CD4-positive, alpha-beta memory T cell (primary cell): ENCODE measurements at regions of chr12 and their contacts with region 1.

Region 1: GRCh38 chr12:9797722-9798619 is 29.3 kb upstream of the KLRF1 start:
- DNase-seq: peak; percentile 73 to 79 (median 75)
- H3K4me3 ChIP-seq: no peak overlapping the region
- H3K4me3 Mint-ChIP-seq: peak overlapping the region in 4 of 8 donors; percentile 4 to 70 (median 41)
- H3K27ac ChIP-seq: no peak overlapping the region
- H3K27ac Mint-ChIP-seq: peak overlapping the region in 6 of 7 donors; percentile 57 to 89 (median 81)
- H3K4me1 ChIP-seq: peaks cover 51% of the 10 kb centered on the region
- H3K4me1 Mint-ChIP-seq: peaks cover 35 to 48% (median 43%) of the 10 kb centered on the region in 4 donors
- H3K27me3 ChIP-seq: no peaks in the 10 kb centered on the region
- H3K27me3 Mint-ChIP-seq: peaks cover 0 to 2% of the 10 kb centered on the region in 2 donors

Region 2: GRCh38 chr12:9634177-9634803 is 163.7 kb before region 1 on chr12:
- CTCF ChIA-PET with region 1: interaction called, 19 read pairs
- POLR2A ChIA-PET with region 1: interaction called, 3 read pairs
- intact Hi-C with region 1: no loop called
- DNase-seq: peak; percentile 76 to 77 (median 77)
- H3K4me3 ChIP-seq: no peak overlapping the region
- H3K4me3 Mint-ChIP-seq: peak overlapping the region in 6 of 8 donors; percentile 51 to 80 (median 61)
- H3K27ac ChIP-seq: no peak overlapping the region
- H3K27ac Mint-ChIP-seq: peak overlapping the region; percentile 22 to 97 (median 91)
- H3K4me1 ChIP-seq: peaks cover 70% of the 10 kb centered on the region
- H3K4me1 Mint-ChIP-seq: peaks cover 47 to 92% (median 73%) of the 10 kb centered on the region in 4 donors
- H3K27me3 ChIP-seq: no peaks in the 10 kb centered on the region
- H3K27me3 Mint-ChIP-seq: no peaks in the 10 kb centered on the region

Region 3: DNA sequence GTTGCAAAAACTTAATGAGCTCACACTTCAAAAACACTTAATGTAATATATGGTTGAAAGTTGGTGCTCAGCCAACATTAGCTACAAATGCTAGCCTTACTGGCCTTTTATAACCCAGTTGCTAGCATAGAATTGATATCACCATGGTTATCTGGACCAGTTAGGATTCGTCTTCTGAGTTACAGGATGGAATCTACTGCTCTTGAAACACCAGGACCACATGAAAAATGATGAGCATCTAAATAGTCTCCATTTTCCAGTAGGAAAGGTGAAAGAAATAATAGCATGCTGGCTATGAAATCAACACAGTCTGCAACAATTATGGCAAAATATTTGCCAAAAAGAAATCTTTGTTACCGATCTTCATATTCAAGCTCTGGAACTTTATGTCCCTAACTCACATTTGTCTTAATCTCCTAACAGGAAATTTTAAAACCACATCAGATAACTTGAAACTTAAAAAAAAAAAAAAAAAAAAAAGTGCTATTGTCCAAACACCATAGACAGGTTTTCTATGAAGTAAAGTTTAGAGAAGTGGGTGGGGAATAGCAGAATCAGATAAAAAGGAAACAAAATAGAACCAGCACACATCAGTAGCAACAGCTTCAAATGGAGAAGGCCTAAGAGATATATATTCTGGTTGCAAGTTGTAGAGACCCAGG is 24.6 kb before region 1 on chr12:
- CTCF ChIA-PET with region 1: interaction called, 39 read pairs
- POLR2A ChIA-PET with region 1: interaction called, 9 read pairs
- intact Hi-C with region 1: no loop called
- DNase-seq: peak in 3 of 5 donors; percentile 45 to 59 (median 50)
- H3K4me3 ChIP-seq: no peak overlapping the region
- H3K4me3 Mint-ChIP-seq: peak overlapping the region; percentile 26 to 79 (median 68)
- H3K27ac ChIP-seq: peak overlapping the region; percentile 24
- H3K27ac Mint-ChIP-seq: peak overlapping the region; percentile 15 to 88 (median 77)
- H3K4me1 ChIP-seq: peaks cover 82% of the 10 kb centered on the region
- H3K4me1 Mint-ChIP-seq: peaks cover 68 to 93% (median 82%) of the 10 kb centered on the region in 4 donors
- H3K27me3 ChIP-seq: no peaks in the 10 kb centered on the region
- H3K27me3 Mint-ChIP-seq: no peaks in the 10 kb centered on the region

Region 4: GRCh38 chr12:9808504-9808903 is 10.5 kb after region 1 on chr12:
- CTCF ChIA-PET with region 1: interaction called, 36 read pairs
- POLR2A ChIA-PET with region 1: interaction called, 7 read pairs
- intact Hi-C with region 1: no loop called
- DNase-seq: no peak
- H3K4me3 ChIP-seq: no peak overlapping the region
- H3K4me3 Mint-ChIP-seq: no peak overlapping the region
- H3K27ac ChIP-seq: no peak overlapping the region
- H3K27ac Mint-ChIP-seq: no peak overlapping the region
- H3K4me1 ChIP-seq: peaks cover 2% of the 10 kb centered on the region
- H3K4me1 Mint-ChIP-seq: peaks cover 2 to 6% (median 4%) of the 10 kb centered on the region in 4 donors
- H3K27me3 ChIP-seq: no peaks in the 10 kb centered on the region
- H3K27me3 Mint-ChIP-seq: peaks cover 11% of the 10 kb centered on the region in 2 donors

Region 5: GRCh38 chr12:9925708-9926393 is 127.9 kb after region 1 on chr12:
- CTCF ChIA-PET with region 1: interaction called, 4 read pairs
- POLR2A ChIA-PET with region 1: no interaction called
- intact Hi-C with region 1: loop called (anchors 1 kb)
- DNase-seq: peak in 4 of 5 donors; percentile 46 to 50 (median 48)
- H3K4me3 ChIP-seq: peak overlapping the region in 1 of 2 donors; percentile 17
- H3K4me3 Mint-ChIP-seq: peak overlapping the region in 7 of 8 donors; percentile 51 to 86 (median 78)
- H3K27ac ChIP-seq: no peak overlapping the region
- H3K27ac Mint-ChIP-seq: peak overlapping the region in 1 of 7 donors; percentile 81
- H3K4me1 ChIP-seq: no peaks in the 10 kb centered on the region
- H3K4me1 Mint-ChIP-seq: peaks cover 5 to 10% (median 5%) of the 10 kb centered on the region in 4 donors
- H3K27me3 ChIP-seq: no peaks in the 10 kb centered on the region
- H3K27me3 Mint-ChIP-seq: peaks cover 1 to 6% of the 10 kb centered on the region in 2 donors

Region 6: DNA sequence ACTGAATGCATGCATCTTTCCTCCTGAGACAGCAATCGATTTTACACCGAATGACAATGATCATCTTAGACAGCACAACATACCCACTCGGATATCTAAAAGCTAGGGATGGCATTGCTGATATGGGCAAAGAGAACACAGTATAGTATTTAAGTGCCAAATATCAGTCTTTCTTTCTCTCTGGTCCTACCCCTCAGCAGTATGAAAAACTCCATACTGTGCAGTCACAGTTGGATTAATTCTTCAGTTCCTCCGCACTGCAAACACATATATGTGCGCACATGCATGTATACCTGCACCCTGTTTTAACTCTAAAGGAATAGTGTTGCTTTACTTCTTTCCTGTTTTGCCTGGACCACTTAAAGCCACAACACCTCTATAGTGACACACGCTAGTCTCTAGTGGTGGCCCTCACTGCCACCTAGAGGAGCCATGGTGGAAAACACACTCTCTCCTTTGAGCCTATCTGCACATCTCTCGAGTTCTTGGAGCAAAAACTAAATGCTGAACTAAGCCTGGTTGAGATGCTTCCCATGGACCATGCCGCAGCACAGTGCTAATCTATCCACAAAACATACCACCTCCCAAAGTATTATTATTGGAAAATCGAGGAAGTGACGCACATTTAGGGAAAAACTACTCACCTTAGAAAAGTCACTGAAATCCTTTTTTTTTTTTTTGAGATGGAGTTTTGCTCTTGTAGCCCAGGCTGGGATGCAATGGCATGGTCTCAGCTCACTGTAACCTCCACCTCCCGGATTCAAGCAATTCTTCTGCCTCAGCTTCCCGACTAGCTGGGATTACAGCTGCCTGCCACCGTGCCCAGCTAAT is 392.8 kb after region 1 on chr12:
- CTCF ChIA-PET with region 1: no interaction called
- POLR2A ChIA-PET with region 1: no interaction called
- intact Hi-C with region 1: loop called (anchors 5 kb)
- DNase-seq: peak; percentile 41 to 54 (median 49)
- H3K4me3 ChIP-seq: no peak overlapping the region
- H3K4me3 Mint-ChIP-seq: no peak overlapping the region
- H3K27ac ChIP-seq: no peak overlapping the region
- H3K27ac Mint-ChIP-seq: no peak overlapping the region
- H3K4me1 ChIP-seq: no peaks in the 10 kb centered on the region
- H3K4me1 Mint-ChIP-seq: peaks cover 3 to 5% (median 4%) of the 10 kb centered on the region in 4 donors
- H3K27me3 ChIP-seq: no peaks in the 10 kb centered on the region
- H3K27me3 Mint-ChIP-seq: peaks cover 10 to 17% of the 10 kb centered on the region in 2 donors